Activated CD4-positive, alpha-beta T cell treated with anti-CD3 and anti-CD28 coated beads for 36 hours (primary cell): ENCODE measurements at regions of chr9 and their contacts with region 1.

Region 1: DNA sequence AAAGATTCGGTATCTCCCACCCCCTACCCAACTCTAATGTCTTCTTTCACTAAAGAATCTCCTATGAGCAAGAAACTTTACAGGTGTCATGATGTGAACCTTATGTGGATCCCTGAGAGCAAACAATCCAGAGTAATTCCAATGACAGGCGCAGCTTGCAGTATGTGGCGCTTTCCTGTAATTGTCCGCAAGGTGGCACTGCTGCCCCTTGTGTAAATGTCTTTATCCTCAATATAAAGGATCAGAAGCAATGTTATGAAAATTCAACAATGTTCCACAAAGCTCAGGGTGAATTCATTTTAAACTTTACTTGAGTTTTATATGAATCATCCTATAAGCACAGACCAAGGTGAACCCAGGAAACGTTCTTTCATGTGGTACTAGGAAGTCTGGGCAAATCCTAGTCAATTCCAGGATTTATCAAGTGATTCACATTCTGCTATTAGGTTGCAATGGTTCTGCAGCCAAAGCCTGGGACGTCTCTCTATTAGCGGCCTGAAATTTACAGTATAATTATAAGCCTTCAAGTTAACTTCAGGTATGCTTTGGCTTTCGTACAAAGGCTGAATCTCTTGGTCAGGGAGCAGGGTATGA is 113.7 kb downstream of the TRPM6 start:
- DNase-seq: peak; percentile 85
- ATAC-seq: peak; percentile 45
- H3K4me3 Mint-ChIP-seq: no peak overlapping the region
- H3K27ac Mint-ChIP-seq: peak overlapping the region; percentile 31
- H3K4me1 Mint-ChIP-seq: peaks cover 20% of the 10 kb centered on the region
- H3K27me3 Mint-ChIP-seq: peaks cover 16% of the 10 kb centered on the region

Region 2: DNA sequence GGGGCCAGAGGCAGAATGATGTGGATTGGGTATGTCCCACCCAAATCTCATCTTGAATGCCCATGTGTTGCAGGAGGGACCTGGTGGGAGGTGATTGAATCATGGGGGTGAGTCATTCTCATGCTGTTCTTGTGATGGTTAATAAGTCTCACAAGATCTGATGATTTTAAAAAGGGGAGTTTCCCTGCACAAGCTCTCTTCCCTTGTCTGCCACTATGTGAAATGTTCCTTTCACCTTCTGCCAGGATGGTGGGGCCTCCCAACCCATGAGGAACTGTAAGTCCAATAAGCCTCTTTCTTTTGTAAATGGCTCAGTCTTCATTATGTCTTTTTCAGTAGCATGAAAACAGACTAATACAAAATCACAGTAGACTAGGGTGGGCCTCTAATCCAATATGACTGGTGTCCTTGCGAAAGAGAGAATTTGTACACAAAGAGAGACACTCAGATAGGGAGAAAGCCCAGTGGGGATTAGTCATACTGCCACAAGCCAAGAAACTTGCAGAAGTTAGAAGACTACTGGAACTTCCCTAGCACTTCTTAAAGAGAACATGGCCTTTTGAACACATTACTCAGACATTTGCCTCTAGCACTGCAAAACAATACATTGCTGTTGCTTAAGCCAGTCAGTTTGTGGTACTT is 1553.9 kb before region 1 on chr9:
- CTCF ChIA-PET with region 1: no interaction called
- POLR2A ChIA-PET with region 1: no interaction called
- intact Hi-C with region 1: loop called in 1 of 2 experiments (anchors 5 kb)
- DNase-seq: peak; percentile 65
- ATAC-seq: peak; percentile 93
- H3K4me3 Mint-ChIP-seq: no peak overlapping the region
- H3K27ac Mint-ChIP-seq: peak overlapping the region; percentile 74
- H3K4me1 Mint-ChIP-seq: peaks cover 31% of the 10 kb centered on the region
- H3K27me3 Mint-ChIP-seq: peaks cover 43% of the 10 kb centered on the region

Region 3: DNA sequence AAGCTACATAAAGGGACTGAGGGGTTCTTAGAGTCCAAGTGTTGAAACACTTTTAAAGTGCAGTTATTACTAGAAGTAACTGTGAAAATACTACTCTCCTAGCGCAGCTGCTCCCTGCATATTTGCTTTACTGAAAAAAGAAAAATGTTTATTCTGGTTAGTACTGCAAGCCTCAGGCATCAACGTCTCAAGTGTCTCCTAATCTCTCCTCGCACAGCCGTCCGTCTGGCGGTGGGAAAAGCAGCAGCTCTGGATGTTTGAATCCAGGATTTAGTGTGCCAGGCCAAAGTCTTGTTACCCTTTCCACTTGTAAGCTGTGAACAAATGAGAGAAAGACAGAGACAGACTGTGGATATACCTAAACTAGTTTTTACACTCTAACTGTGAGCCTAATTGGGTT is 245.8 kb before region 1 on chr9:
- CTCF ChIA-PET with region 1: no interaction called
- POLR2A ChIA-PET with region 1: no interaction called
- intact Hi-C with region 1: no loop called
- DNase-seq: no peak
- ATAC-seq: no peak
- H3K4me3 Mint-ChIP-seq: no peak overlapping the region
- H3K27ac Mint-ChIP-seq: no peak overlapping the region
- H3K4me1 Mint-ChIP-seq: no peaks in the 10 kb centered on the region
- H3K27me3 Mint-ChIP-seq: peaks cover 5% of the 10 kb centered on the region

Region 4: DNA sequence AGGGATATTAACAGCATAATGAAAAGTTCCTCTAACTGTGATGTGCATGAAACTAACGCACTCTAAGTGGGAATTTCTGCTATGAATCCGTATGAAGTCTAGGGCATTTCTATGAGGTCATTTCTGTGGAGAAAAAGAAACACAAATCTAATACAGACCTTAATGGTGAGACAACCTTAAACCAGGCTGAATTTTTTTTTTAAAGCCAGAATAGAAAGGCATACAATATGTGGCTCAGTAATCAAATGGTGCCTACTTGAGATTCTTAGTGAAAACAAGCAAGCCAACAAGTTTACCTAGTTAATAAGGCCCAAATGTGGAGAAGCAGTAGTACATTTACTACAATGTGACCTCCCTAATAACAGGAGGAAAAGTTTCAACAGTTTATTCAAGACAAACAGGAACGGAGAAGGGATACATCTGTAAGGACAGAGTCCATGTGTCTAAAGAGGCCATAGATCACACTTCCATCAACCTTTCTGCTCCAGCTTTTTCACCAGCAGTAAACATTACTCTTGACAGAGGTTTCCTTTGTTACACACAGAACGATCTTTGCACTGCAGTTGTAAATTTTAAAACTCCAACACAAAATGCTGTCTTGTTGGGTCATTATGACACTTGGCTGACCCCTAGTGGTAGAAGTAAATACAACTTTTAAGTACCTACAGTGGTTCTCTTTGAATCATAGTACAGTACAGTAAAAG is 227.9 kb after region 1 on chr9:
- CTCF ChIA-PET with region 1: interaction called, 160 read pairs
- POLR2A ChIA-PET with region 1: no interaction called
- intact Hi-C with region 1: loop called (anchors 1 kb)
- DNase-seq: no peak
- ATAC-seq: peak; percentile 92
- H3K4me3 Mint-ChIP-seq: no peak overlapping the region
- H3K27ac Mint-ChIP-seq: no peak overlapping the region
- H3K4me1 Mint-ChIP-seq: peaks cover 2% of the 10 kb centered on the region
- H3K27me3 Mint-ChIP-seq: no peaks in the 10 kb centered on the region

Region 5: GRCh38 chr9:75027187-75028107 is 253.5 kb after region 1 on chr9:
- CTCF ChIA-PET with region 1: interaction called, 12 read pairs
- POLR2A ChIA-PET with region 1: no interaction called
- intact Hi-C with region 1: loop called in 1 of 2 experiments (anchors 1 kb)
- DNase-seq: peak; percentile 72
- ATAC-seq: peak; percentile 34
- H3K4me3 Mint-ChIP-seq: peak overlapping the region; percentile 98
- H3K27ac Mint-ChIP-seq: peak overlapping the region; percentile 99
- H3K4me1 Mint-ChIP-seq: peaks cover 33% of the 10 kb centered on the region
- H3K27me3 Mint-ChIP-seq: no peaks in the 10 kb centered on the region

Region 6: GRCh38 chr9:75053869-75054268 is 279.9 kb after region 1 on chr9:
- CTCF ChIA-PET with region 1: no interaction called
- POLR2A ChIA-PET with region 1: no interaction called
- intact Hi-C with region 1: no loop called
- DNase-seq: no peak
- ATAC-seq: no peak
- H3K4me3 Mint-ChIP-seq: no peak overlapping the region
- H3K27ac Mint-ChIP-seq: no peak overlapping the region
- H3K4me1 Mint-ChIP-seq: no peaks in the 10 kb centered on the region
- H3K27me3 Mint-ChIP-seq: no peaks in the 10 kb centered on the region

Region 7: DNA sequence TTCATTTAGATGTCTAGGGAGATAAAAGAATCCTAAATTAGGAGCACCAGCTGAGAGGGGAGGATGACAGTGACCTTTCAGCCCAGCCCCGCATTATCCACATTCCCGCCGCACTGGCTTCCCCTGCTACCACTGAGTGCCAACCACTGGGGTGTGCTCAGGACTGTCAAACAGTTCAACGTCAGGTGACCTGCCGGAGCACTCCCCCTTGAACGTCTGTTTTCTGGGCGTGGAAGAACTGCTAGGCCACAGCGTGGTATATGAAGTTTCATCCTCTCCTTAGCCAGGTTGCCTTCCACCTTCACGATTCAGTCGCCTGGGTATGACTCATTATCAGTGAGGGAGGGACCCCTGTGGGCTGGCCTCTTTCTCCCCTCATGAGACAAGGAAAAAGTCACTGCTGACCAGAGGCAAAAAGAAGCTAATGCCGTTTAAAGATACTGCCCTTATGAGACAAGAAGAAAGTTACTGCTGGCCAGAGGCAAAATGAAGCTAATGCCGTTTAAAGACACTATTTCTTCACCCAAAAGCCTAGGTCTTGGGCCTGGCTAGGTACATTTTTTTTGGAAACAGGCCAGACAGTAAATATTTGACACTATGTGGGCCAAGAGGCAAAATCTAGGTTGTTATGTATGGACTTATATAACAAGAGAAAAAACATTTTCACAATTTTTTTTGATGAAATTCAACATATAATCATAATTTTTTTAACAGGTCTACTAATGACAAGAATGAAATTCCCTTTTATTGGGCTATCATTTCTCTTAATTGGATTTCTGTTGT is 309.4 kb after region 1 on chr9:
- CTCF ChIA-PET with region 1: interaction called, 12 read pairs
- POLR2A ChIA-PET with region 1: interaction called, 3 read pairs
- intact Hi-C with region 1: no loop called
- DNase-seq: peak; percentile 44
- ATAC-seq: no peak
- H3K4me3 Mint-ChIP-seq: no peak overlapping the region
- H3K27ac Mint-ChIP-seq: peak overlapping the region; percentile 39
- H3K4me1 Mint-ChIP-seq: peaks cover 36% of the 10 kb centered on the region
- H3K27me3 Mint-ChIP-seq: no peaks in the 10 kb centered on the region

Region 8: GRCh38 chr9:75185585-75186170 is 411.7 kb after region 1 on chr9:
- CTCF ChIA-PET with region 1: no interaction called
- POLR2A ChIA-PET with region 1: no interaction called
- intact Hi-C with region 1: loop called in 1 of 2 experiments (anchors 5 kb)
- DNase-seq: peak; percentile 79
- ATAC-seq: peak; percentile 72
- H3K4me3 Mint-ChIP-seq: no peak overlapping the region
- H3K27ac Mint-ChIP-seq: no peak overlapping the region
- H3K4me1 Mint-ChIP-seq: peaks cover 19% of the 10 kb centered on the region
- H3K27me3 Mint-ChIP-seq: no peaks in the 10 kb centered on the region

Region 9: GRCh38 chr9:76302947-76303940 is 1529.3 kb after region 1 on chr9:
- CTCF ChIA-PET with region 1: no interaction called
- POLR2A ChIA-PET with region 1: no interaction called
- intact Hi-C with region 1: loop called in 1 of 2 experiments (anchors 5 kb)
- DNase-seq: peak; percentile 21
- ATAC-seq: no peak
- H3K4me3 Mint-ChIP-seq: no peak overlapping the region
- H3K27ac Mint-ChIP-seq: no peak overlapping the region
- H3K4me1 Mint-ChIP-seq: no peaks in the 10 kb centered on the region
- H3K27me3 Mint-ChIP-seq: peaks cover 7% of the 10 kb centered on the region